ENCODE measurements at regions of chr14 and their contacts with region 1.

Region 1: GRCh38 chr14:67619446-67620216 is at the start of gene ARG2:
- DNase-seq: peak; percentile 92 to 95 (median 94)
- H3K4me3 ChIP-seq: peak within 1 kb of the TSS; percentile 60 to 91 (median 79)
- H3K27ac ChIP-seq: peak within 1 kb of the TSS; percentile 78 to 91
- H3K4me1 ChIP-seq: peaks cover 16 to 36% (median 26%) of the 10 kb centered on the region in 4 experiments
- H3K27me3 ChIP-seq: peaks cover 0 to 6% (median 2%) of the 10 kb centered on the region in 5 experiments

Region 2: DNA sequence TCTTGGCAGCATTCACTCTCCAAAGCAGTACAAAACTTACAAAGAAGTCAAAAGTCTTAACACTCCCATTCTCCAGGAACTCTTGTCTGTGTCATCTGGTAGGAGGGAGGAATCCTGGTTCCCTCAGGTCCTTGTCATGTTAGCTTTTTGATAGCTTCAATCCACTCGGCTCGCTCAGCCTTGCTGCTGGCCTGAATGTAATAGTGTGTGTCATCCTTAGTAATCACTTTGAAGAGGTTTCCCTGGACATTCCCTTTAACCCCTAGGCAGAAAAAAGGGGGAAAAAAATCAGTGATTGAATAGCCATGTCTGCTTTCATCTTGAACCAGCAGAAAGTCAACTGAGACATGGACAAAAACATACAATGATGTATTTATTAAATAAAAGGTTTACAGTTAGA is 232.4 kb before region 1 on chr14:
- CTCF ChIA-PET with region 1: no interaction called
- POLR2A ChIA-PET with region 1: no interaction called
- DNase-seq: no peak
- H3K4me3 ChIP-seq: no peak overlapping the region
- H3K27ac ChIP-seq: no peak overlapping the region
- H3K4me1 ChIP-seq: peaks cover 10 to 32% (median 20%) of the 10 kb centered on the region in 4 experiments
- H3K27me3 ChIP-seq: no peaks in the 10 kb centered on the region

Region 3: GRCh38 chr14:67400434-67400833 is 219.2 kb before region 1 on chr14:
- CTCF ChIA-PET with region 1: no interaction called
- POLR2A ChIA-PET with region 1: no interaction called
- DNase-seq: no peak
- H3K4me3 ChIP-seq: no peak overlapping the region
- H3K27ac ChIP-seq: no peak overlapping the region
- H3K4me1 ChIP-seq: no peaks in the 10 kb centered on the region
- H3K27me3 ChIP-seq: no peaks in the 10 kb centered on the region

Region 4: DNA sequence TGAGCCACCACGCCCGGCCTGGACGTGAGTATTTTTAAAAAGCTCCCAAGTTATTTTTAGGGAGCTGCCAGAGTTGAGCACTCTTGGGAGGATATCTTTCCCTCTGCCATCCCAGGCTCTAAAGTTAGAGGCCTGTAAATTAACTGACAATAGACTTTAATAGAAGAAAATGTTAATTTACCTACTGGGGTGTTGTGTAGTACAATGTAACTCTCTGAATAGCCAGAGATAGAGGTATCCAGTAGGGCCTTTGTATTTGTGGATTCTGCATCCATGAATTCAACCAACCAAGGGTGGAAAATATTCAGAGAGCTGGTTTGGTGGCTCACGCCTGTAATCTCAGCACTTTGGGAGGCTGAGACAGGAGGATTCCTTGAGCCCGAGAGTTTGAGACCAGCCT is 12.0 kb before region 1 on chr14:
- CTCF ChIA-PET with region 1: interaction called, 10 read pairs
- POLR2A ChIA-PET with region 1: no interaction called
- DNase-seq: no peak
- H3K4me3 ChIP-seq: no peak overlapping the region
- H3K27ac ChIP-seq: no peak overlapping the region
- H3K4me1 ChIP-seq: no peaks in the 10 kb centered on the region
- H3K27me3 ChIP-seq: no peaks in the 10 kb centered on the region

Region 5: DNA sequence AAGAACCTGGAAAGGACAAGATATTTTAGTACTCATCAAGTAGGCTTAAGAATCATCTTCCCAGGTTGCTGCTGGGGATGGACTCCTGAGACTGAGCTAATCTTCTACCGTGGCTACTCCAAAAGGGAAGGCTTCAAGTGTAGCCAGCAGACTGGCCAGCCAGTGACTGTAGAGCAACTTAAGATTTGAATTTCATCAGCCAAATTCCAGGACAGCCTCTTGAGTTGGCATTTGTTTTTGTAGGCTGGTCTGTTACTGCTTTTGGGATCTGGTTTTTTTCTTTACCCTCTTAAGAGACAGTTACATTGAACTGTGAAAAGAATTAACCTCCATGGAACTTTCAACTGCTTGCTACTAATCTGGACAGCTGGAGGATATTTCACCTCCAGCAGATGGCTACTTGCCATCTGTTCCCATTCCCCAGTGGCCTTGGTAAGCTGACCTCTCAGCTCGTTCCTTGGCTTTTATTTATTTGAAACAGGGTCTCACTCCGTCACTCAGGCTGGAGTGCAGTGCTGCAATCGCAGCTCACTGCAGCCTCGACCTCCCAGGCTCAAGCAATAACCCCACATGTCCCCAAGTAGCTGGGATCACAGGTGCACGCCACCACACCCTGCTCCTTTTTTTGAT is 34.1 kb after region 1 on chr14:
- CTCF ChIA-PET with region 1: interaction called, 14 read pairs
- POLR2A ChIA-PET with region 1: interaction called, 4 read pairs
- DNase-seq: no peak
- H3K4me3 ChIP-seq: no peak overlapping the region
- H3K27ac ChIP-seq: no peak overlapping the region
- H3K4me1 ChIP-seq: no peaks in the 10 kb centered on the region
- H3K27me3 ChIP-seq: no peaks in the 10 kb centered on the region

Measured in common myeloid progenitor, CD34-positive (primary cell).